GM10248 (cell line): ENCODE measurements at regions of chr15 and their contacts with region 1.

Region 1: GRCh38 chr15:81323944-81324881 is at the start of gene STARD5:
- DNase-seq: peak; percentile 98
- CTCF ChIP-seq: no peak

Region 2: DNA sequence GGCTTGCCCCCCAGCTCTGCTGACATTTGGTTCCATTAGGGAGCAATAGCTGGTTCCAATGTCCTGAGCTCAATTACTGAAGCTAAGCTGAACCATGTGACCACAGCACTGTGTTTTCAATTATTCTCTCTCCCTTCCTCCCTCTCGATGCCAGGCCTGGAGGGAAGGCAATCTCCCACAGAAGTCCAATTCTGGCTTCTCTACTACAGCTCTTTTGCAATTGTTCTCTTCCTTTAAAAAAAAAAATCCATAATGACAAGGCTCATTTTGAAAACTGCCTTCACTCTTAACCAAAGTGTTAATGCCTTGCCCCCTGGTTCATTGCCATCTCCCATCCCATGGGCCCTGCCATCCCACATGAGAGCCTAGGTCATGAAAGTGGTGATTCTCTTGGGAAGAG is 102.8 kb before region 1 on chr15:
- CTCF ChIA-PET with region 1: no interaction called
- POLR2A ChIA-PET with region 1: no interaction called
- DNase-seq: no peak
- CTCF ChIP-seq: no peak

Region 3: DNA sequence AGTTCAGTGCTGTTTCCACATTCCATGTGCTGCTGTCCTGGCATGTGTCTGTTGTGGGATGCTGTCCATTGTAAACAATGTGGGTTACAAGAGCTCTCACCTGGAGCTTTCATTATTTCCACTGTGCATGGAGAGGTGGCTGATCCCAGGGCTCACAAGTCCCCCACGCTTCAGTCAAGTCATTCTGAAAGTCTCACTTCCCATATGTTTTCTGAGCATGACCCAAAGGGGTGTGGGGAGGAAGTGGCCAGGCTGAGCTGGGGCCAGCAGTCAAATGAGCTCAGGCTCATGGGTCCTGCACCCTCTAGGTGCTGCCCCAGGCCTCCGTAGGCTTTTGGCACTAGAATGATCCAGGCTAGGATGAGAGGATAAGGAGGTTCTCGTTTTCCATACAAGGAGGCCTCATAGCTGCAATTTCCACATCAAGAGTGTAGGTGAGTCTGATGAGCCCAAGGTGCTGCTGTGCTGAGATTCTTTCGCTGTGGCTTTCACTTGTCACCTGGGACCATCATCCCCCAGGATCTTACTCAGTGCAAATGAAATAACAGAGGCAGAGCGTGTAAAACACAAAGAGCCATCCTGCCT is 22.3 kb before region 1 on chr15:
- CTCF ChIA-PET with region 1: interaction called, 5 read pairs
- POLR2A ChIA-PET with region 1: interaction called, 12 read pairs
- DNase-seq: peak; percentile 63
- CTCF ChIP-seq: no peak

Region 4: DNA sequence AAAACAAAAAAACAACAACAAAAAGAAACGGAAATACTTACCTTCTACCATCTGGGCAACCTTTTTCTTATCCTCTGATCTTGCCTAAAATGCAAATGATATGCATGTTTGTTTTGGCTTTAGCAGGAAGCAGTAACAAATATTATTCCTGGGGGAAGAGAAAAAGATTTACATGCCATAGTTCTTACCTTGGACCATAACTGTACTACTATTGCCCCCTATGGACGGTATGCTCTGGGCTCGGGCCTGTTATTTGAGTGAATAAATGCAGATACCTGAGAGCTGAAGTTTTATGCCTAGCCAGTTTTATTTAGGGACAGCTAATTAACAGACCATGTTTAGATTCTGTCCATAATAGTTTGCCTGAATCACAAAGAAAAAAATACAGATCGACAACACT is 12.4 kb after region 1 on chr15:
- CTCF ChIA-PET with region 1: interaction called, 10 read pairs
- POLR2A ChIA-PET with region 1: no interaction called
- DNase-seq: peak; percentile 47
- CTCF ChIP-seq: peak; percentile 45